Posterior cingulate gyrus (tissue), 11 donors: ENCODE measurements at regions of chr19 and their contacts with region 1.

Region 1: GRCh38 chr19:6393074-6393983 is at the start of gene GTF2F1:
- DNase-seq: peak; percentile 92 to 99 (median 96)

Region 2: DNA sequence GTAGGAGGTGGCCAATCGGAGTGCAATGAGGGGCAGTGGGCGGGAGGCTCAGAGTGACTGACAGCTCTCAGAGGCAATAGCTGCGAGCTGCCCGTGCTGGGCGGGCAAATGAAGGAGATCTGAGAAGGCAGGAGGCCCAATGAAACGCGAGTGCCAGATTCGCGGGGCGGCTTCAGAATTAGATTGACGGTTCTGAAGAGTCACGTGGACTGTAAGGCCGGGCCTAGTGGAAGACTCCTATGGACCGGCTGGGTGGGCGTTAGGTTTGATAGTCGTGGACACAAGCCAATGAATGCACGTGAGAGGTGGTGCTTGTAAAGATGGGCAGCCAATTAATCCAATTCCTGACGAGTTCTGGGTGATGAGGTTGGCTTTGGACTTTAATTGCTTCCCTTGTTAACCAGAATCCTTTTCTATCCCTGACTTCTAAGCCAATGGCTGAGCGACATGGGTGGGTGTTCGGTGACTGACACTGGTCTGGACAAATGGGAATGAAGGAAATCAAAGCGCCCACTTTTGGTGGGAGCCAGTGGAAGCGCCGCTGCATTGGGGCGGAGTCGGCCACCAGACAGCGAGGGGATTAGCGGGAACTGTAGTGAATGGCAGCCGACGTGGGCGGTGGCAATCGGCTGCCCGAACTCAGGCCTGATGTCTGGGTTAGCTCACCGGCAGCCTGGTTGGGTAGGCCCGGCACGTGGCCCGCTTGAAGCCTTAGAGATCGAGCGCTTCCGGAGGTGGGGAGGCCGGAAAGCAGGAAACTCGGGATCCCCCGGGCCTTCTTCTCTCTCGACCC is 31.8 kb after region 1 on chr19:
- intact Hi-C with region 1: loop called (anchors 2 kb)
- DNase-seq: peak; percentile 90 to 100 (median 99)